Right cardiac atrium (tissue), 5 donors: ENCODE measurements at regions of chr20 and their contacts with region 1.

Region 1: GRCh38 chr20:34849778-34850177 is 22.9 kb downstream of the GGT7 start:
- DNase-seq: no peak
- ATAC-seq: no peak
- H3K4me3 ChIP-seq: no peak overlapping the region
- H3K27ac ChIP-seq: no peak overlapping the region
- H3K4me1 ChIP-seq: no peaks in the 10 kb centered on the region
- H3K27me3 ChIP-seq: no peaks in the 10 kb centered on the region

Region 2: GRCh38 chr20:34377072-34377847 is 472.5 kb before region 1 on chr20:
- intact Hi-C with region 1: no loop called
- DNase-seq: no peak
- ATAC-seq: no peak
- H3K4me3 ChIP-seq: no peak overlapping the region
- H3K27ac ChIP-seq: no peak overlapping the region
- H3K4me1 ChIP-seq: peaks cover 2% of the 10 kb centered on the region
- H3K27me3 ChIP-seq: no peaks in the 10 kb centered on the region

Region 3: DNA sequence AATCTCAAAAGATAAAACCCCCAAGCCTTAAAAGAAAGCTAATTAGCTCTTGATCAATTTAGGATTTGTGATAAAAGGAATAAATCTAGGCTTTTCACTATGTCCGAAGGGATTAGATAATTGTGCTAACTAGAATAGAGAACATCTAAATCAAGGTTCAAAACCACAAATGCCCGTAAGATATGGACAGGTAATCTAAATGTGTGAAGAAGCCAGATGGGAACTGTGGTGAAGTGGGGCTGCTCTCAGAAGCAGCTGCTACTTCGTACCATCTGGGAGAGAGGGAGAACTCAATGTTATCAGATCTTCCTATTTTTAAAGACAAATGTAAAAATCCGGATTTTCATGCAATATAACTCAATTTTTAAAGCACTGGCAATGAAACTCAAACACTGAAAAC is 68.6 kb before region 1 on chr20:
- intact Hi-C with region 1: no loop called
- DNase-seq: no peak
- ATAC-seq: no peak
- H3K4me3 ChIP-seq: no peak overlapping the region
- H3K27ac ChIP-seq: no peak overlapping the region
- H3K4me1 ChIP-seq: no peaks in the 10 kb centered on the region
- H3K27me3 ChIP-seq: no peaks in the 10 kb centered on the region

Region 4: DNA sequence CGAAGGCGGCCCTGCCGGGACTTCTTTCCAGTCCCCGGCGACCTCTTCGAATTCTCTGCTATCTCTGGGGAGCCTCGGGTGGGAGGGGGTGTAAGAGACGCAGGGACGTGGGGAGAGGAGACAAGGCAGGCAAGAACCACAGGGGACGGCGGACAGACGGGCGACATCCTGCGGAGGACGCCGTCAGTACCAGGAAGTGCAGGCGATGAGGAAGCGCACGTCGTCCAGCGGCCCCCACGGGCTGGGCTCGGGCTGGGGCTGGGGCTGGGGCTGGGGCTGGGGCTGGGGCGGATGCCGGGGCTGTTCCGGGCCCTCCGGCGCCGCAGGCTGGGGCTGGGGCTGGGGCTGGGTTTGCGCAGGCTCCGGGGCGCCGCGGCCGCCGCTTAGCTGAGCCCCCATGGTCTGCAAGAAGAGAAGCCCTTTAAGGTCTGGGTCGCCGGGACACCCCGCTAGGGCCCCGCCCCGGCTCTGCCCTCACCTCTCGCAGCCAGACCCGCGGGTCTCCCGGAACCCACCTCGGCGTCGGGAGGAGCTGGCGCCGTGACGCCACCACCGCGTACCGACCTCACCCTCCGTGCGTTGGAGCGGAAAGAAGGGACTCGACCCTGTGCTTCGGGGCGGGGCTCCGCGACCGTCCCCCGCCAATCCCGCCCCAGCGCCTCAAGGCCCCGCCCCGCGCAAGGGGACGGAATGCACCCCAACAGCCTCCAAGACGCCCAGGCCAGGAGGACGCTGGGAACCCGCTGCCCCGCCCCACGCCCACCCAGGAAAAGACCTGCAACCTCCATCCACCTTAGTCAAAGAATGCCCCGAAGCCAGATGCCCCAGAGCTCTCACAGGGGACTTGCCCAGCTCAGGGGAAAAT is 428.0 kb after region 1 on chr20 and contains the start of gene MMP24OS:
- intact Hi-C with region 1: loop called in 1 of 4 experiments (anchors 10 kb)
- DNase-seq: peak; percentile 93 to 97 (median 97)
- ATAC-seq: peak; percentile 93 to 97
- H3K4me3 ChIP-seq: peak within 1 kb of the TSS; percentile 77
- H3K27ac ChIP-seq: peak within 1 kb of the TSS; percentile 95
- H3K4me1 ChIP-seq: no peaks in the 10 kb centered on the region
- H3K27me3 ChIP-seq: no peaks in the 10 kb centered on the region
- total RNA-seq, gene MMP24OS: 45.1 to 65.0 (median 48.6) TPM